ENCODE measurements at regions of chr10 and their contacts with region 1.

Region 1: DNA sequence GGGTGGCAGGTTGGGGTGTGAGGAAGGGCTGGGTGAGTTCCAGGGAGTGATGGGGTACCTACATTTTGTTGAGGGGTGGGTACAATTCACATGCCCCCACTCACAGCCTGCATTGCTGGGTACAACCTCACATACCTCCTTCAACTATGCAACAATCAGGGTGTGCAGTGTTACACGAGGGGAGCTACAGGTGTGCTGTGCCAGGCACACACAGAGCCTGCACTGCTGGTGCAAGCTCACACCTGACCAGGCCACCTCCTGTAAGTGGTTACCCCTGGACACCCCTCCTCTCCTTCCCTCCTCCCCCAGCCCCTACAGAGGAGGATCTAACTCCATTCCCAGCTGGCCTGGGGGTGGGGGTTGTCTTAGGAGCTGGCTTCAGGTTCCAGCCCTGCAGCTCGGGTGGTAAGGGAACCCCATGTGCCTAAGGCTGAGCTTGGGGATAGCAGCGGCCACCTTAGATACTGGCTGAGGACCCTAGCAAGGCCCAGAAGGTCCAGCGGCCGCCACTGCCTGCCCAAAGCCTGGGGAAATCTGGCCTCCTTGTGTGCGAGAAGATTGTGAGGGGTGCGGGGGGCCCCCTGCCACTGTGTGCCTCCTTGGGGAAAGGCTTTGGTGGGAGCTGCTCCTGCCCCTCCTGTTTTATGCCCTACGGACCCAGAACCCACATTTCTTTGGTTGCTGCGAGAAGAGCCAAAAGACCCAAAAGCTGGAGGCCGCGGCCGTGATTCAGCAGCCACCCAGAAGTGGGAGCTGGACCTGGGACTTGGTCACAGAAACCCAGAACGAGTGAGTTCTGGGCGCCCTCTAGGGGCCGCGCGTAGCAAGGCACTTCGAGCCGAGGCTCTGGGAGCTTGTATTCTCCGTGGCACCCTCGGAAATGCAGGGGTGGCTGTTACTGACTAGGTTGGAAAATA is 10.8 kb downstream of the TLX1 start:
- DNase-seq: peak; percentile 69 to 92 (median 77)
- ATAC-seq: peak; percentile 68 to 91 (median 87)
- H3K4me3 ChIP-seq: no peak overlapping the region
- H3K27ac ChIP-seq: no peak overlapping the region
- H3K4me1 ChIP-seq: peaks cover 0 to 33% (median 7%) of the 10 kb centered on the region in 12 donors
- H3K27me3 ChIP-seq: peaks cover 70 to 100% (median 94%) of the 10 kb centered on the region in 9 donors
- CTCF ChIP-seq: peak; percentile 89 to 98 (median 96)
- POLR2A ChIP-seq: no peak

Region 2: GRCh38 chr10:101050208-101051069 is 91.4 kb before region 1 on chr10:
- intact Hi-C with region 1: loop called in 7 of 10 experiments (anchors 5 to 10 kb)
- DNase-seq: peak; percentile 38 to 83 (median 56)
- ATAC-seq: peak in 3 of 4 donors; percentile 50 to 75 (median 56)
- H3K4me3 ChIP-seq: peak overlapping the region in 4 of 12 donors; percentile 7 to 25 (median 12)
- H3K27ac ChIP-seq: no peak overlapping the region
- H3K4me1 ChIP-seq: peaks cover 0 to 17% (median 7%) of the 10 kb centered on the region in 12 donors
- H3K27me3 ChIP-seq: peaks cover 27 to 57% (median 47%) of the 10 kb centered on the region in 9 donors
- CTCF ChIP-seq: peak; percentile 58 to 85 (median 76)
- POLR2A ChIP-seq: no peak

Region 3: DNA sequence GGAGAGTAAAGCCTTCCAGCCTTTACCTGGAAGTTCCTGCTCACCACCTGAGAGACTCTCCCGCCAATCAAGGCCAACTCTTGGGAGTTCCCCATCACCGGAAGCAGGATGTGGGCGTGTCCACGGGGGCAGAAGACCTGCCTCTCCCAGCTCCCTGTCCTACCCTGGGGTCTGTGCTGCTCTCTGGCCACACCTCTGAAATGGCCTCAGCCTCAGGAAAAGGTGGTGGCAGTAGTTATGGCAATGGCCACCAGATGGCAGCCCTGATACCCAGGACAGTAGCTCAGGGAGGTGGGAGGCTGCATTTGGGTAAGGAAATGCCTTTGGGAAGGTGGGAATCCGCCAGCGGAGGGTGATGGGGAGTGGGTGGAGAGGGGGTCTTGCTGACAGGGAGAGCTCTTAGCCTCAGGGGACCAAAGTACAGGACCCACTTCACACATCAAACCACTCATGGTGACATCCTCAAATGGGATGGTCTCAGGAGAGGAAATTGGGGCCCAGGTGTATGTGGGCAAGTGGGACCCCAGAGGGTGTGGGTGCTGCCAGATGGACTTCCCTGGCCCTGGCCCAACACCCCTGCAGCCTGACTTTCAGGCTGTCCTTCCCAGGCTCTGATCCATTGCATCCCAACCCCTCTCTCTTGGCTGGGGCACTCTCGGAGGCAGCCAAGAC is 46.2 kb before region 1 on chr10:
- intact Hi-C with region 1: loop called (anchors 1 to 5 kb)
- DNase-seq: peak in 4 of 5 donors; percentile 36 to 67 (median 59)
- ATAC-seq: peak in 3 of 4 donors; percentile 59 to 88 (median 77)
- H3K4me3 ChIP-seq: no peak overlapping the region
- H3K27ac ChIP-seq: no peak overlapping the region
- H3K4me1 ChIP-seq: no peaks in the 10 kb centered on the region
- H3K27me3 ChIP-seq: peaks cover 4 to 82% (median 27%) of the 10 kb centered on the region in 9 donors
- CTCF ChIP-seq: peak; percentile 60 to 80 (median 70)
- POLR2A ChIP-seq: no peak